Caco-2 (cell line): ENCODE measurements at regions of chr12 and their contacts with region 1.

Region 1: GRCh38 chr12:49636979-49637755 is 13.8 kb downstream of the PRPF40B start:
- DNase-seq: peak; percentile 65 to 66
- H3K4me3 ChIP-seq: no peak overlapping the region
- H3K4me3 Mint-ChIP-seq: no peak overlapping the region
- H3K27ac Mint-ChIP-seq: no peak overlapping the region
- H3K4me1 ChIP-seq: peaks cover 6% of the 10 kb centered on the region; the same call in 1 of the 2 replicates
- H3K4me1 Mint-ChIP-seq: peaks cover 7% of the 10 kb centered on the region
- H3K27me3 ChIP-seq: no peaks in the 10 kb centered on the region
- H3K27me3 Mint-ChIP-seq: no peaks in the 10 kb centered on the region
- CTCF ChIP-seq: peak; percentile 58 to 70

Region 2: DNA sequence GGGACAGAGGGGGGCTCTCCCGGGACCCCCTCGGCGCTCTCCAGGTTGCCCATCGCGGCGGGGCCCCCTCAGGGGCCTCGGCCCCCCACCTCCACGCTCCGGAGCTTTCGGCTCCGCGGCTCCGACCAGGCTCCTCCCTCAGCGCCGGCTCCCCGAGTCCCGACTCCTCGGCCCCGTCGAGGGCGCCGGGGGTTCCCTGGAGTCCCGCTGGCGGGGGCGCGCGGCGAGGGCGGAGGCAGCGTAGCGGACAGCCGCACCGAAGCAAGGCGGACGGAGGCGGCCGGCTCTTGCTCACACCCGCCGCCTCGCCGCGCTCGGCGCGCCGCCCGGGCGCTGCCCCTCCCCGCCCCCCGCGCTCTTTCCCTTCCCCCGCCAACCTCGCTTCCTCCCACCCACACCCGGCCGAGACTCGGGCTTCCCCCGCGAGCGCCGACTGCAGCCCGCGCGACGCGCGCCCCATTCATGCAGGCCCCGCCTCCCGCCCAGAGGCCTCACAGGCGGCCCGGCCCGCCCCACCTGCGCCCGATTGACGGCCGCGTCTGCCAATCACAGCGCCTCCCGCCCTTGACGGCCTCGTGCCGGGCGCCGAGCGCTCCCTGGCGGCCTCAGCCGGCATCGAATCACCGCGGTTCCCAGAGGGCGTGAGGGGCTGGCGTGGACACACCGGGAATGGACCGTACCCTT is 70.1 kb after region 1 on chr12 and contains the start of gene FMNL3:
- CTCF ChIA-PET with region 1: interaction called, 5 read pairs
- POLR2A ChIA-PET with region 1: no interaction called
- intact Hi-C with region 1: loop called (anchors 2 kb)
- DNase-seq: peak; percentile 96 to 100
- H3K4me3 ChIP-seq: peak within 1 kb of the TSS; percentile 76
- H3K4me3 Mint-ChIP-seq: peak within 1 kb of the TSS; percentile 83
- H3K27ac Mint-ChIP-seq: peak within 1 kb of the TSS; percentile 3
- H3K4me1 ChIP-seq: peaks cover 5% of the 10 kb centered on the region; the same call in 1 of the 2 replicates
- H3K4me1 Mint-ChIP-seq: peaks cover 6% of the 10 kb centered on the region
- H3K27me3 ChIP-seq: no peaks in the 10 kb centered on the region
- H3K27me3 Mint-ChIP-seq: peaks cover 13% of the 10 kb centered on the region
- CTCF ChIP-seq: peak; percentile 95 to 96
- total RNA-seq, gene FMNL3: 9.2 and 10.7 TPM in 2 replicates